ENCODE measurements at regions of chr6 and their contacts with region 1.

Region 1: GRCh38 chr6:39166189-39166911 is 51.4 kb upstream of the SAYSD1 start:
- DNase-seq: peak; percentile 64 to 80
- H3K4me3 ChIP-seq: no peak overlapping the region
- H3K27ac ChIP-seq: no peak overlapping the region
- H3K4me1 ChIP-seq: peaks cover 32% of the 10 kb centered on the region
- H3K27me3 ChIP-seq: no peaks in the 10 kb centered on the region
- CTCF ChIP-seq: peak; percentile 93

Region 2: GRCh38 chr6:38846844-38847243 is 319.5 kb before region 1 on chr6:
- CTCF ChIA-PET with region 1: no interaction called
- POLR2A ChIA-PET with region 1: no interaction called
- intact Hi-C with region 1: no loop called
- DNase-seq: peak in 1 of 2 experiments; percentile 52
- H3K4me3 ChIP-seq: no peak overlapping the region
- H3K27ac ChIP-seq: no peak overlapping the region
- H3K4me1 ChIP-seq: no peaks in the 10 kb centered on the region
- H3K27me3 ChIP-seq: no peaks in the 10 kb centered on the region
- CTCF ChIP-seq: no peak

Region 3: DNA sequence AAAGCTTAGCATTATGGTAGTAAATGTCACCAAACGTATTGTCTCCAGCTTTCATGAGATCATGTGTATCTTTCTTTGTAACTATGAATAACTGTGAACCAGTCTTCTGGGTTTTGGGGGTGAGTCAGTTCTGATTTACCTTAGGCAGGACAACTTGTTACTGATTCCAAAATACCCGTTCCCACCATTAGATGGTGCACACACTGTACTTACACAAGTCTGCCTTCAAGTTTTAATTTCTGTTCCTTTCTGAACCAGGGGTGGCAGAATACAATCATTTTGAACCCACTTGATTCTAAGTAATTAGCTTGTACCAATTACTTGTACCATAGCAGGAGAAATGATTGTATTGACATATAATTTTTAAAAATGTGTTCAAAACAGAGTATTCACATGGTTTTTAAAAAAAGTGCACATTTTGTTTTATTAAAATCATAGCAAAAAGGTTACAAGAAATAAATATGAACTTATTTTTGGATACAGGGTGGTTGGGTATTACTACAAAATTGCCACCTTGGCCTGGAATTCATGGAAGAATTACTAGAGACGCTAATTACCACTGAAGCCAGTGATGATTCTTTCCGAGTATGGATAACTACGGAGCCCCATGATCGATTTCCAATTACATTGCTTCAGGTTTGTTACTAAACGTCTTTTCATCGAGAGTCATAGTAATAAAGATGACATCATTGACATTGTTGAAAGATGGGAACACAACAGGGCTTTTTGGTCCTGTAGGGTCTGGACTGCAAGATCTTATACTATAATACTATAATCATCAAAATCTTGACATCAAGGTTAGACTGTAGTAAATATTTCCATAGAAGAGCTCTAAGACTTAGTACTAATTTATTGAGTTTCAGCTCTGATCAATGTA is 192.9 kb before region 1 on chr6:
- CTCF ChIA-PET with region 1: no interaction called
- POLR2A ChIA-PET with region 1: no interaction called
- intact Hi-C with region 1: loop called (anchors 5 kb)
- DNase-seq: peak; percentile 15 to 67
- H3K4me3 ChIP-seq: no peak overlapping the region
- H3K27ac ChIP-seq: no peak overlapping the region
- H3K4me1 ChIP-seq: no peaks in the 10 kb centered on the region
- H3K27me3 ChIP-seq: peaks cover 40% of the 10 kb centered on the region
- CTCF ChIP-seq: peak; percentile 79

Region 4: DNA sequence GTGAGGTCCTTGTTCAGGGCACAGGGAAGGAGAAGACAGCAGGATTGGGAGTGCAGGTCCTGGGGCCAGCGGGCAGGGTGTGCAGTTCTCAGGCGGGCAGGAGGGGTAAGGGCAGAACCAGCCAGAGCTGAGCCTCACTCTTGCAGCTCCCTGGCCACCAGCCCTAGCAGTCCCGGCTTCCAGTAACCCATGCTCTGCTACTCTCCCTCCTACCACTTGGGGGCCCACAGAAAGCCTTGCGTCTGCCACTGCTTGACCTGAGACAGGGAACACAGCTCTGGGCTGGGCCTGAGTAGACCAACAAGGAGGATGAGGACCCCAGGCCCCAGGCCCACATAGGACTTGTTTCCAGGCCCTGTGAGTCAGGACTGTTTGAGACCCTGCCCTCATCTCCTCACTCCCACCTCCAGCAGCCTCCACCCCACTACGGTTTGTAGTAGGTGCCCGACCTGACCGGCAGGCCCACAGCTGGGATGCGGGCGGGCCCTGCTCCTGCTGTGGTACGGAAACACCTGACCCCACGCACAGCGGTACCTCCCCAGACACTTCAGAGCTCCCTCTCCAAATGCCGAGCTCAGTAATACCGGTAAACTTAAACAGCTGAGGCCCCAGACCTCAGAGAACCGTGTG is 23.7 kb after region 1 on chr6:
- CTCF ChIA-PET with region 1: no interaction called
- POLR2A ChIA-PET with region 1: interaction called, 3 read pairs
- intact Hi-C with region 1: loop called (anchors 1 kb)
- DNase-seq: no peak
- H3K4me3 ChIP-seq: no peak overlapping the region
- H3K27ac ChIP-seq: no peak overlapping the region
- H3K4me1 ChIP-seq: peaks cover 49% of the 10 kb centered on the region
- H3K27me3 ChIP-seq: no peaks in the 10 kb centered on the region
- CTCF ChIP-seq: peak; percentile 71

Region 5: DNA sequence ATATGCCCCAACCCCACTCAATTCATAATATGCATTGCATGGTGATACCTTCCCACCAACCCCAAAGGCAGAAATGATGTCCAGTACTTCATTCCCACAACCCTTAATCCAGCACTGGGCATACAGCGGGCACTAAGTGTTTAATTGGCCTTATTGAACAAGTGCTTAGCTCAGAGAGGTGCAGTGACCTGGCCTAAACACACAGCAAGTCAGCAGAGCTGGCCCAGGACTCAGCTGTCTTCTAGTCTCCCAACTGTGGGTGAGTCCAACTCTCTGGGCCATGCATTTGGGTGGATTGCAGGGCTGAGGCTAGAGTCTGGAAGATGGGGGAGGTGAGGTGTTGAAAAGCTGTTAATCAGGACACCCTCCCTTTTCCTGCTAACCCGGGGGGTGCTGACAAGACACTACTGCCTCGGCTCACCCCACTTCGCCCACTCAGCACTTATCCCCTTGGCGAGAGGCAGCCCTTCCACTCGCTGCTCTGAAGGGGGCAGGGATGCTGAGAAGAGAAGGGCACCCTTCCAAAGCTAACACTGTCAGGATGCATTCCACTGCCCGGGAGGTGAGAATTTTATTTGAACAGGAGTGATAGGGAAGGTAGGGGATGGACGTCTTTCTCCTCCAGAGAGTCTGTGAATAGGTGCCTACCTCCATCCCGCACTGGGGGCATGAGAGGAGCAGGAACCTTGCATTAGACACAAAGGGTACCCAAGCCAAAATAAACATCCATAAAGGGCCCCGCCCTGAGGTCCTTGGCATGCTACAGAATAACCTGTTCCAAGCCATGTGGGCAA is 48.7 kb after region 1 on chr6:
- CTCF ChIA-PET with region 1: no interaction called
- POLR2A ChIA-PET with region 1: interaction called, 6 read pairs
- intact Hi-C with region 1: loop called (anchors 1 kb)
- DNase-seq: peak; percentile 80 to 85
- H3K4me3 ChIP-seq: no peak overlapping the region
- H3K27ac ChIP-seq: 0 out of 2 replicates have a peak overlapping the region, but pooled peaks have one; percentile 41
- H3K4me1 ChIP-seq: peaks cover 68% of the 10 kb centered on the region
- H3K27me3 ChIP-seq: no peaks in the 10 kb centered on the region
- CTCF ChIP-seq: no peak

Region 6: DNA sequence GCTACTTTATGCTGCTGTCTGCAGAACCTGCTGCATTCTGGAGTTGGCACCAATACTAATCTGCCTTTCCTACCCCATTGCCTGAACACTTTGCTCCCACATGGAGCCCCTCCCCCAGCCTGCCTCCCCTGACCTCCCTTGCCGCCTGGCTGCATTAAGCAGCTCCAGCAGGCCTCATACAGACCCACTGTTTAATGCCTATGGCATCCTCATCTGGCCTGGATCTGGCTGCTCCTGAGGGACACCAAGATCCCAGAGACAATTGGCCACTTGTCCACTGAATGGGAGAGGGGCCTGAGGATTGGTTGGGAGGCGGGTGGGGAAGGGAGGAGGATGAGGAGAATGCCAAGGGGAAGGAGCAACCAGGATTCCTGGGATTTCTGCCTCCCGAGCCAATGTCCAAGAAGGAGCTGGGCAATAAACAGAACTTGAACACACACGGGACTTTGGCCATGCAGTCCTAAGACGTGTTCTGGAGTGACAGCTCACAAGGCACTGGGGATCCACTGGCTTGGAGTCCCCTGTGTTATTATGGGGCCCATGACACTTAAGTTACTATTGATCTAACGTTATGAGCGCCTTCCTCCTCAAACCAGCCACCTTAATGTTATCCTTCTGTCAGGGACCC is 73.3 kb after region 1 on chr6:
- CTCF ChIA-PET with region 1: no interaction called
- POLR2A ChIA-PET with region 1: no interaction called
- intact Hi-C with region 1: no loop called
- DNase-seq: no peak
- H3K4me3 ChIP-seq: no peak overlapping the region
- H3K27ac ChIP-seq: no peak overlapping the region
- H3K4me1 ChIP-seq: no peaks in the 10 kb centered on the region
- H3K27me3 ChIP-seq: no peaks in the 10 kb centered on the region
- CTCF ChIP-seq: no peak

Region 7: DNA sequence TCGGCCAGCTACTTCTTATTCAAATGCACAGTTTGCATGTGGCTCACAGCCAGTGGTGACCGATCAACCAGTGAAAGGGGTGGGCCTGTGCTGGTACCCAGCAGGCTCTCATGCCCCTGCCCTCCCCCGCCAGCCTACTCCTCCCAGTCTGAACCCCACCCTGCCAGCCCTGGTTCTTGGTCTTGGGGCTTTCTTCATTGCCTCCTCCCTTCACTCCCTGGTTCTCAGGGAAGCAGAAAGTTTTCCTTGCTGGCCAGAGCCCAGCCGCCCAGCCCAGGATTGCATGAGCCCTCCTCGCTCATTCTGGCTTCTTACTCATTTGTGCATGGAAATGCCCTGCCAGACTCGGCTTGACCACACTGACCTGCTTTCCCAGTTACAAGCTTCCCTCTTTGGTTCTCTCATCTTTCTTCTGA is 107.1 kb after region 1 on chr6:
- CTCF ChIA-PET with region 1: no interaction called
- POLR2A ChIA-PET with region 1: no interaction called
- intact Hi-C with region 1: loop called (anchors 1 kb)
- DNase-seq: peak; percentile 61 to 62
- H3K4me3 ChIP-seq: no peak overlapping the region
- H3K27ac ChIP-seq: peak overlapping the region; percentile 34; the same call in 1 of the 2 replicates
- H3K4me1 ChIP-seq: peaks cover 37% of the 10 kb centered on the region
- H3K27me3 ChIP-seq: no peaks in the 10 kb centered on the region
- CTCF ChIP-seq: no peak

Region 8: DNA sequence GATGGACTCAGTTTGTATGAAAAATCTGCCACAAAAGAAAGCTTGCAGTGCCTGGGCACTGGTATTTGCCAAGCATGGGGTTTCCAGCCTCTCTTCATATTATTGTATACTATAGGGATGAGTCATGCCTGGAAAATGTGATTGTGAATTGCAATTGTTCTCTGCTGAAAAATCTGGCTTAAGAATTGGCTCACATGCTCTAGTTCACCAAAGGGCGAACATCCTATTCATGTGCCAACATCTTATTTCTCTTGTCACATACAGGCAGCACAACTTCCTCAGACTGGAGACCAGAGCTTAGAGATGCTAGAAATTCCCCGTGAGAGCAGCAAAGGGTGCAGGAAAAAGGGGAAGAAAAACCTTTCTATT is 259.7 kb after region 1 on chr6:
- CTCF ChIA-PET with region 1: no interaction called
- POLR2A ChIA-PET with region 1: no interaction called
- intact Hi-C with region 1: no loop called
- DNase-seq: peak; percentile 27 to 37
- H3K4me3 ChIP-seq: no peak overlapping the region
- H3K27ac ChIP-seq: no peak overlapping the region
- H3K4me1 ChIP-seq: no peaks in the 10 kb centered on the region; the same call in 1 of the 2 replicates
- H3K27me3 ChIP-seq: no peaks in the 10 kb centered on the region; the same call in 1 of the 2 replicates
- CTCF ChIP-seq: no peak